BJ (cell line): ENCODE measurements at regions of chr10 and their contacts with region 1.

Region 1: DNA sequence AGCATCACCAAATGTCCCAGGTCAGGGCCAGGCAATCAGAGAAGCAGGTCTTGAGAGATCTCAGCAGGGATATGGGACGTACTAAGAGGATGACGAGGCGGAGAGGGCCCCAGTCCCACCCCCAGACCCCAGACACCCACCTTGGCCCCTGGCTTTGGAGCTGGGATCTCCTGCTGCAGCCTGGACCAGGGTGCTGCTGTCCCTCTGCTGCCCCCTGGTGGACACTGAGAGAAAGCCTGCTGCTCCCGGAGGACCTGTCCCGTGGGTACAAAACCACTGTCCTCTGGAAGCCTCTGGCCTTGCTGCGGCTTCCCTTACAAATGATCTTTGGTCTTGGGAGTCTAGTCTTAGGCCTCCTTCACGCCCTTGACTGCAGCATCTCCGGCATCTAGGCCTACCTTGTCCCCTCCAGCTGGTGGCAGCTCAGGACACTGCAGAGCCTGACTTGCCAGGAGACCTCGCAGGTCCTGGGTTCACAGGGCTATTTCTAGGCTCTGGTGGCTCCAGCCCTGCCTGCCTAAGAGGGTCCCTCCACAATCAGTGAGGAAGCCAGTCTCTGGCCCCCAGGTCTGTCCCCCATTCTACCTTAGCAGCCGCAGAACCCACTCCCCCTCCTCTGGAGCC is 97.1 kb downstream of the RGS10 start:
- DNase-seq: no peak
- H3K4me3 ChIP-seq: no peak overlapping the region
- H3K27me3 ChIP-seq: no peaks in the 10 kb centered on the region
- CTCF ChIP-seq: peak; percentile 98

Region 2: GRCh38 chr10:119253433-119254174 is 191.8 kb before region 1 on chr10:
- CTCF ChIA-PET with region 1: interaction called, 11 read pairs
- POLR2A ChIA-PET with region 1: no interaction called
- DNase-seq: peak; percentile 92
- H3K4me3 ChIP-seq: no peak overlapping the region
- H3K27me3 ChIP-seq: no peaks in the 10 kb centered on the region
- CTCF ChIP-seq: peak; percentile 47

Region 3: DNA sequence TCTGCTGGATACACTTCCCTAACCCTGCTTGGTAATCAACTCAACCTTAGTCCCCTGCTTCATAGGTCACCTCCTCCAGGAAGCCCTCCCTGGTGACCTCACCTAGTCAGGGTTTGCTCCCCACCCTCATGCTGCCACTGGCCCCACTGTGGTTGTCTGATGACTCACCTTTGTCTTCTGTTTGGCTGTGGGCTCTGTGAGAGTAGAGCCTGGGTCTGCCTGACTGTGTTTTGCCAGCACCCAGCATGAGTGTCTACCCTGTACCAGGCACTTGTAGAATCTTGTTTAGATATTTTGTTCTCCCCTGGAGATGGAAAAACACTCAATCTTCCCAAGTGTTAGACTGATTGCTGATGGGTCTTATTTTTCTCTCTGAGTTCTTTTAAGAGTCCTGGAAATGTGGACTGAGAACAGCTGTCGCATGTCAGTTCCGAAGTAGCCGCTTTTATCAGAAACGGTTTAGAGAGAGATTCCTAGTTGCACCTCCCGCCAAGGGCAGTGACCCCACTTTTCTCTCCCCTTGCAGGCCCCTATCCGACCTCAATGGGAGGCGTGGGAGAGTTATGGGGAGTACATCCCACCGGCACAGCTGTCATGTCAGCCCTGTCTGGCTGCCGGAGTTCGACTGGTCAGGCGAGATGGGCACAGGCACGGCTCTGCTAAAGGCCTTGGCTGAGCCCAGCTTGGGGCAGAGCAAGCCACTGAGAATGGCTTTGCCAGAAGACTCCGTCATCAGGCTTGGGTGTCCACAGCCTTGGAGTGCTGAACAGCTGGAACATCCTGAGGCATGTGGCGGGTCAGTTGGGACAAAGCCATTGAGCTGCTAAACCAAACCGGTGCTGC is 103.7 kb before region 1 on chr10:
- CTCF ChIA-PET with region 1: no interaction called
- POLR2A ChIA-PET with region 1: no interaction called
- DNase-seq: no peak
- H3K4me3 ChIP-seq: no peak overlapping the region
- H3K27me3 ChIP-seq: no peaks in the 10 kb centered on the region
- CTCF ChIP-seq: no peak

Region 4: DNA sequence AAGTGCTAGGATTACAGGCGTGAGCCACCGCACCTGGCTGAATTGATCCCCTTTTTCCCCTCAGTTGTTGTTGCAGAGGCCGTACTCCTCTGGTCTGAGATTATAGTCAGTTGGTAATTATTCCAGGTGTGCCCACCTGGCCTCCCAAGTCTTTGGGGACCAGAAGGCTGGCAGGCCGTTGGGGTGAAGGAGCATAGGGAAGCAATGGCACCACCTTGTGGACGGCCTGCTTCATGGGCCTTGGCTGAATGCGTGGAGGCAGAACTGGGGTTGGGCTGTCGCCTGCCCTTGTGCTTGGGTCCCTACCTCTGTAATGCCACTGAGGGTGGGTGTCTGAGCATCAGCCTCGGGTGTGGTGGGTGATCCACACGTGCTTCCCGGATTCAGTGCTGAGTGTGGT is 28.6 kb before region 1 on chr10:
- CTCF ChIA-PET with region 1: interaction called, 15 read pairs
- POLR2A ChIA-PET with region 1: no interaction called
- DNase-seq: no peak
- H3K4me3 ChIP-seq: no peak overlapping the region
- H3K27me3 ChIP-seq: no peaks in the 10 kb centered on the region
- CTCF ChIP-seq: peak; percentile 67

Region 5: GRCh38 chr10:119421887-119422681 is 23.3 kb before region 1 on chr10:
- CTCF ChIA-PET with region 1: interaction called, 15 read pairs
- POLR2A ChIA-PET with region 1: no interaction called
- DNase-seq: no peak
- H3K4me3 ChIP-seq: no peak overlapping the region
- H3K27me3 ChIP-seq: no peaks in the 10 kb centered on the region
- CTCF ChIP-seq: no peak

Region 6: DNA sequence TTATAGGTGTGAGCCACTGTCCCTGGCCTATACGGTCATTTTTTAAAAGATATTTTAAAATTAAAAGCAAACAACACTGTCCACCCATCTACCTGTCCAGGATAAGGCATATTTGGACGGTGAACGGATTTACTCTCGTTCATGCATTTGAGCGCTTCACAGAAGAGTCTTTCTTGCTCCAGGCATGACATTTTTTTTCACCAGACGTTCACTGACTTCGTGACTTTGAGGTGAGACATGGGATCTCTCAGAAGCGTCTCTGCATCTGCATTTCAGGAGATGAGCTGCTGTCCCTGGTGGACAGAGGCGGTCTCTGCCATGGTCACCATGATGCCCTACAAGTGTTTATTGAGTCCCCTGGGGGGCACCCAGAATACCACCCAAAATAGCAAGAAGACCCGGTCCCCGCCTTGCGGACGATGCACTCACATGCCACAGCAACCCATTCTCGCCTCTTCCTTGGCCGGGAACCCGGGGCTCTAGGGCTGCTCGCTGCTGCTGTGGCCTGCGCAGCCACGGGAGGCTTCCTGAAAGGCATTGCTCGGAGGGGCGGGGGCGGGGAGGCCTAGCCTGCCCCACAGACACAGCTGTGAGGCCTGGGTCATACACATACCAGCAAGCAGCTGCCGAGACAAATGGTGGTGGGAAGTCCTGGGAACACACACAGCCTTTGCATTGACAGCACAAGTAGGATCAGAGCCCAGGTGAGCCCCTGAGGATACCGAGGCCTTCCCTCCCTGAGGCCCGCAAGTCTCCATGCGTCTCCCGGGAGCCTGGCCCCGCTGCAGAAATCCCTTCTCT is 12.7 kb after region 1 on chr10:
- CTCF ChIA-PET with region 1: interaction called, 12 read pairs
- POLR2A ChIA-PET with region 1: no interaction called
- DNase-seq: no peak
- H3K4me3 ChIP-seq: no peak overlapping the region
- H3K27me3 ChIP-seq: no peaks in the 10 kb centered on the region
- CTCF ChIP-seq: no peak

Region 7: GRCh38 chr10:119693262-119693957 is 248.0 kb after region 1 on chr10:
- CTCF ChIA-PET with region 1: no interaction called
- POLR2A ChIA-PET with region 1: no interaction called
- DNase-seq: no peak
- H3K4me3 ChIP-seq: no peak overlapping the region
- H3K27me3 ChIP-seq: peaks cover 2% of the 10 kb centered on the region
- CTCF ChIP-seq: no peak